Dorsolateral prefrontal cortex (tissue), 120 donors: ENCODE measurements at regions of chr4 and their contacts with region 1.

Region 1: GRCh38 chr4:149765630-149766029 is 50.0 kb downstream of the IQCM start:
- DNase-seq: no peak
- H3K4me3 ChIP-seq: no peak overlapping the region
- H3K27ac ChIP-seq: no peak overlapping the region
- H3K27me3 ChIP-seq: no peaks in the 10 kb centered on the region
- CTCF ChIP-seq: no peak

Region 2: DNA sequence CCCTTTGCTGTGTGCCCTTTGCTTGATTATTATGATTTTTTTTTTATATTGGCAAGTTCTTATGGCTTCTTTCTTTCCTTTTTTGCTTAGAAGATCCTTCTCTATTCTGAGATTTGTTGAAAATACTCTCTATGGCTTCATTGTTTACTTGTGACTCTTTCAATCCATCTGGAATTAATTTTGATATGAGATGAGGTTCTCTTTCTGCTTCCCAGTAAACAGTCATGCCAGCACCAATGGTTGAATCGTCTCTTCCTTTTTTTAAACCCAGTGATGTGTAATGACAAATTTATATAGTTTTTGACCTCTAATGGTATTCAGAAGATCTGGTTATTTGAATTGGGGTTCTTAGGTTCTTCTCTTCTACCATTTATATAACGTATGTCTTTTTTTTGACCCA is 1911.9 kb before region 1 on chr4:
- intact Hi-C with region 1: no loop called
- DNase-seq: no peak
- H3K4me3 ChIP-seq: no peak overlapping the region
- H3K27ac ChIP-seq: no peak overlapping the region
- H3K27me3 ChIP-seq: peaks cover 0 to under 1% (median 0%) of the 10 kb centered on the region in 45 donors
- CTCF ChIP-seq: no peak

Region 3: DNA sequence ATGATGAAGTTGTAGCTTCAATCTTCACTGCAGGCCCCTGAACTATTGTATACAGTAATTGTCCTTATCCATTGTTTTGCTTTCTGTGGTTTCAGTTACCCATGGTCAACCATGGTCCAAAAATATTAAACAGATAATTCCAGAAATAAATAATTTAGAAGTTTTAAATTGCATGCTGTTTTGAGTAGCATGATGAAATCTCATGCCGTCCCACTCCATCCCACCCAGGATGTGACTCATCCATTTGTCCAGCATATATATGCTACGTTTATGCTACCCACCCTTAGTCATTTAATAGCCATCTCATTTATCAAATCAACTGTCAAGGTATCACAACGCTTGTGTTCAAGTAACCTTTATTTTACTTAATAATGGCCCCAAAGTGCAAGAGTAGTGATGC is 15.5 kb after region 1 on chr4:
- intact Hi-C with region 1: loop called in 1 of 2 experiments (anchors 2 kb)
- DNase-seq: no peak
- H3K4me3 ChIP-seq: no peak overlapping the region
- H3K27ac ChIP-seq: no peak overlapping the region
- H3K27me3 ChIP-seq: peaks cover 0 to 4% (median 0%) of the 10 kb centered on the region in 45 donors
- CTCF ChIP-seq: no peak